ENCODE measurements at regions of chr12 and their contacts with region 1.

Region 1: DNA sequence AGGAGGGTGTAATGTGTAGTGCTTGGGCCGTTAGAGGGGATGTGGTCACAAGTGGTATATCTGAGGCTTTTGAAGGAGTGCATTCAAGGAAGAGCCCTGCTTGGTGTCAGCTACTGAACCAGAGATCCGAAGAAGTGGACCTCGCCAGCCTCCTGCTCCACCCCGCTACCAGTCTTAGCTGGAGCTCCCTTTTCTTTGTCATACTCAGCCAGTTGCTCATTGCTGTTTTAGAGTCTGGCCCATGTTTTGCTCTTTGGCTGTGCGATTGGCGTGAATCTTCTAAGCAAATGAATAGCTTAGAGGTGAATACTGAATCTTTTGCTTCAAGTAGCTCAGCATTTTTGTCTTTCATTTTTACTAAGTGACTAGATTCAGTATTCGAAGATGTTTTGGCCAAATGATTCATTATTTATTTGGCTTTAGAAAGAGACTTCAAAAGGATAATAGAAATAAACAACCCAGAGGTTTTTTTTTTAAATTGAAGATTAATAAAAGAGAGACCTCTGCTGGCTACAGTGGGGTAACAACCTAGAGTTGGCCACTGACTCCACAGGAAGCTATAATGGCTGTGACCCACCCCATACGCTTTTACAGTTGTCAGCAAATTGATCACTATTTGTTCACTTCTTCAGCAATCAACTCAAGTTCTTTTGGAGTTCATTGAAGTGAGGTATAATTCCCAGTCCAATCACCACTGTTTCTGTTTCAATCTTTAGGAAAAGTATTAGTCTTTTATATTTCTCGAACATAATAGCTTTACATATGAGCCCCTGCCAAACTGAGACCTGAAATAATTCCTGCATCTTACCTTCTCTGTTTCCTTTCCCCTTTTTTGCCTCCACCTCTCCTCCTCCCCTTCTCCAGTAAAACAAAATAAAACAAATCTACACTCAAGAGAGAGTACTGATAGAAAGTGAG is 19.9 kb downstream of the CDKN1B start:
- DNase-seq: peak; percentile 26 to 71 (median 56)
- H3K4me3 ChIP-seq: peak overlapping the region; percentile 51
- H3K4me3 Mint-ChIP-seq: peak overlapping the region; percentile 77 to 87 (median 85)
- H3K27ac ChIP-seq: peak overlapping the region; percentile 64
- H3K27ac Mint-ChIP-seq: peak overlapping the region; percentile 90 to 97 (median 94)
- H3K4me1 ChIP-seq: peaks cover 34% of the 10 kb centered on the region
- H3K4me1 Mint-ChIP-seq: peaks cover 35 to 54% (median 53%) of the 10 kb centered on the region in 3 donors
- H3K27me3 ChIP-seq: no peaks in the 10 kb centered on the region
- H3K27me3 Mint-ChIP-seq: no peaks in the 10 kb centered on the region

Region 2: GRCh38 chr12:12356886-12357718 is 379.9 kb before region 1 on chr12 and contains the start of gene BORCS5:
- CTCF ChIA-PET with region 1: interaction called, 23 read pairs
- POLR2A ChIA-PET with region 1: interaction called, 20 read pairs
- DNase-seq: peak; percentile 97 to 99 (median 99)
- H3K4me3 ChIP-seq: peak within 1 kb of the TSS; percentile 62
- H3K4me3 Mint-ChIP-seq: peak within 1 kb of the TSS; percentile 88 to 98 (median 97)
- H3K27ac ChIP-seq: peak within 1 kb of the TSS; percentile 94
- H3K27ac Mint-ChIP-seq: peak within 1 kb of the TSS; percentile 91 to 100 (median 99)
- H3K4me1 ChIP-seq: peaks cover 26% of the 10 kb centered on the region
- H3K4me1 Mint-ChIP-seq: peaks cover 36 to 54% (median 52%) of the 10 kb centered on the region in 3 donors
- H3K27me3 ChIP-seq: no peaks in the 10 kb centered on the region
- H3K27me3 Mint-ChIP-seq: peaks cover 0 to 1% of the 10 kb centered on the region in 2 donors
- total RNA-seq, gene BORCS5: 36.4 to 39.7 TPM

Region 3: GRCh38 chr12:12376646-12377448 is 360.2 kb before region 1 on chr12:
- CTCF ChIA-PET with region 1: interaction called, 75 read pairs
- POLR2A ChIA-PET with region 1: interaction called, 13 read pairs
- DNase-seq: peak in 2 of 5 donors; percentile 73 to 76
- H3K4me3 ChIP-seq: no peak overlapping the region
- H3K4me3 Mint-ChIP-seq: no peak overlapping the region
- H3K27ac ChIP-seq: no peak overlapping the region
- H3K27ac Mint-ChIP-seq: peak overlapping the region in 7 of 8 donors; percentile 59 to 97 (median 88)
- H3K4me1 ChIP-seq: peaks cover 28% of the 10 kb centered on the region
- H3K4me1 Mint-ChIP-seq: peaks cover 40 to 60% (median 51%) of the 10 kb centered on the region in 3 donors
- H3K27me3 ChIP-seq: no peaks in the 10 kb centered on the region
- H3K27me3 Mint-ChIP-seq: no peaks in the 10 kb centered on the region

Region 4: GRCh38 chr12:12645485-12645884 is 91.5 kb before region 1 on chr12:
- CTCF ChIA-PET with region 1: interaction called, 86 read pairs
- POLR2A ChIA-PET with region 1: interaction called, 14 read pairs
- DNase-seq: peak; percentile 4 to 67 (median 61)
- H3K4me3 ChIP-seq: no peak overlapping the region
- H3K4me3 Mint-ChIP-seq: peak overlapping the region in 1 of 7 donors; percentile 32
- H3K27ac ChIP-seq: no peak overlapping the region
- H3K27ac Mint-ChIP-seq: peak overlapping the region in 4 of 8 donors; percentile 15 to 27 (median 22)
- H3K4me1 ChIP-seq: no peaks in the 10 kb centered on the region
- H3K4me1 Mint-ChIP-seq: peaks cover 7 to 8% (median 7%) of the 10 kb centered on the region in 3 donors
- H3K27me3 ChIP-seq: no peaks in the 10 kb centered on the region
- H3K27me3 Mint-ChIP-seq: no peaks in the 10 kb centered on the region

Region 5: DNA sequence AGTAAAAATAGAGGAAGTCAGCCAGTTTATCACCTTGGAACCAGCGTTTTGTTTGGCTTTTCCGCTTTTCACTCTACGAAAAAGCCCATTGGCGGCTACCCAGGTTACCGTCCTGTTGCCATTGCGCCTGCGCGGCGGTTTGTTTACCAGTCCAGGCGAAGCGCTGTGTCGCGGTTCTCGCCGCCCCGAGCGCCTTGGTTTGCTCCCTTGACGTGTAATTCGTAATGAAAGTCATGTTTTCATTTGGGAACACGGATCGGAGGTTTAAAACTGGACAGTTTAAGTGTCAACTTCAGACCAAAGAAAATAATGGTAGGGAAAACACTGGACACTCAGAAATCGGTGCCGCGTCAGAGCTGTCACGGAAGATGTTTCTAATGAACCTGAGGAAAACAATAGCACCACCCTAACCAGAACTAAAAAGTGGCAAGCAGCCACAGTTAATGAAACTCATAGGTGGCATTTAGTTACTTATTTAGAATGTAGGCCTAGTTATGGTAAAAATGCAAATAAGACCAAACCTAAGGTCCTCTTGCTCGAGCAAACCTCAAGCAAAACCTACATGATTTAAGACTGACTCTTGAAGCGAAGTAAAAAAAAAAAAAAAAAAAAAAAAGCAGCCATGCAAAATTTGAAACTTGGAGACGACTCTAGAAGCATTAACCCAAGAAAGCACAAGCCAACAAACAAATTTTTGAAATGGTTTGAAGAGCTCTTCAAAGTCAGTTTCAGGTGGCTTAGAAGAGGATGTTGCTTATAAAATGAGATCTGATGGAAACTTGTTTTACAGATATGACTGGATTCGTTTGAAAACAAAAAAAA is 40.2 kb before region 1 on chr12:
- CTCF ChIA-PET with region 1: interaction called, 10 read pairs
- POLR2A ChIA-PET with region 1: interaction called, 9 read pairs
- DNase-seq: peak; percentile 87 to 96 (median 93)
- H3K4me3 ChIP-seq: peak overlapping the region; percentile 80
- H3K4me3 Mint-ChIP-seq: peak overlapping the region; percentile 87 to 99 (median 94)
- H3K27ac ChIP-seq: peak overlapping the region; percentile 98
- H3K27ac Mint-ChIP-seq: peak overlapping the region; percentile 99 to 100 (median 100)
- H3K4me1 ChIP-seq: peaks cover 19% of the 10 kb centered on the region
- H3K4me1 Mint-ChIP-seq: peaks cover 26 to 40% (median 32%) of the 10 kb centered on the region in 3 donors
- H3K27me3 ChIP-seq: no peaks in the 10 kb centered on the region
- H3K27me3 Mint-ChIP-seq: no peaks in the 10 kb centered on the region

Region 6: DNA sequence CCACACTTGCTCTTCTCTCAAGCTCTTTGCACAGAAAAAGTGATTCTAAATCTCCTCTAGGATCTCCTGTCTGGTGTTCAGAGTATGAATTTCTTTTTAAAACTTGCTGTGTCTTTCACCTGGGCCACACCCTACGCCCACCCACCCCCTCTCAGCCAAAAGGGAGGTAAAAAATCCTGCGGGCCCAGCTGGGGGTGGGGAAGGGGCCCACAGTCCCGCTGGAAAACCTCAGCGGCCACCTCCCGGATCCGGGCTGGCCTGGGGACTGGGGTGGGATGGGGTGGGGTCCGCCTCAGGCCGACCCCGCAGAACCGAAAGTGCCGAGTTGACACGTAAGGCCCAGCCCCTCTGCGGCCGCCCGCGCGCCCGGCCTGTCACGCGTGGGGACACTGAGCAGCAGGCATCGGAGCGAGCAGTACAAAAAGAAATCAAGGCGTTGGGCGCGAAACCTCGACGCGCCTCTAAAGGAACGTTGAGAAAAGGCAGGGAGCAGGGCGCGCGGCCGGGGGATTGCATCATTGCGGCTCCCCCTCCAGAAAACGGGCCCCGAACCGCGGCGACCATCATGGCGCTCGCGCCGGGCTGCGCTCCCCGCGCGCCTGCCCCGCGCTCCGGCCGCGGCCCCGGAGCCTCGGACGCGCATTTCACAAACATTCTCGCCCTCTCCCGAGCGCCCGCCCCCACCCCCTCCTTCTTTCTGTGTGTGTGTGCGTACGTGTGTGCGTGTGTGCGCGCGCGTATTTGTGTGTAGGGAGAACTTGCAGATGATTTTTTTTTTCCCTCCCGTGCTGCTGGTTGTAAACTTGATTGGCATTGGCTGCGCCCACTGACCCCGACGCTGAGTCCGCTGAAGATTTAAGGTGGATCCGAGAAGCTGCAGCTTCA is 12.1 kb before region 1 on chr12:
- CTCF ChIA-PET with region 1: interaction called, 56 read pairs
- POLR2A ChIA-PET with region 1: interaction called, 127 read pairs
- DNase-seq: peak; percentile 82 to 96 (median 94)
- H3K4me3 ChIP-seq: peak overlapping the region; percentile 46
- H3K4me3 Mint-ChIP-seq: peak overlapping the region; percentile 89 to 99 (median 96)
- H3K27ac ChIP-seq: peak overlapping the region; percentile 98
- H3K27ac Mint-ChIP-seq: peak overlapping the region; percentile 92 to 99 (median 95)
- H3K4me1 ChIP-seq: peaks cover 44% of the 10 kb centered on the region
- H3K4me1 Mint-ChIP-seq: peaks cover 56 to 64% (median 56%) of the 10 kb centered on the region in 3 donors
- H3K27me3 ChIP-seq: no peaks in the 10 kb centered on the region
- H3K27me3 Mint-ChIP-seq: peaks cover 0 to 11% of the 10 kb centered on the region in 2 donors